ENCODE measurements at regions of chr9 and their contacts with region 1.

Region 1: GRCh38 chr9:129932303-129933151 is 97.3 kb downstream of the USP20 start:
- DNase-seq: peak; percentile 47
- ATAC-seq: peak; percentile 52
- H3K4me3 ChIP-seq: no peak overlapping the region
- H3K27ac ChIP-seq: peak overlapping the region; percentile 84
- H3K4me1 ChIP-seq: peaks cover 46% of the 10 kb centered on the region
- H3K27me3 ChIP-seq: no peaks in the 10 kb centered on the region
- CTCF ChIP-seq: no peak
- EP300 ChIP-seq: 0 out of 4 replicates have a peak, but pooled peaks of 1 of the 2 experiments have one; percentile 18
- POLR2A ChIP-seq: no peak
- RAD21 ChIP-seq: no peak

Region 2: DNA sequence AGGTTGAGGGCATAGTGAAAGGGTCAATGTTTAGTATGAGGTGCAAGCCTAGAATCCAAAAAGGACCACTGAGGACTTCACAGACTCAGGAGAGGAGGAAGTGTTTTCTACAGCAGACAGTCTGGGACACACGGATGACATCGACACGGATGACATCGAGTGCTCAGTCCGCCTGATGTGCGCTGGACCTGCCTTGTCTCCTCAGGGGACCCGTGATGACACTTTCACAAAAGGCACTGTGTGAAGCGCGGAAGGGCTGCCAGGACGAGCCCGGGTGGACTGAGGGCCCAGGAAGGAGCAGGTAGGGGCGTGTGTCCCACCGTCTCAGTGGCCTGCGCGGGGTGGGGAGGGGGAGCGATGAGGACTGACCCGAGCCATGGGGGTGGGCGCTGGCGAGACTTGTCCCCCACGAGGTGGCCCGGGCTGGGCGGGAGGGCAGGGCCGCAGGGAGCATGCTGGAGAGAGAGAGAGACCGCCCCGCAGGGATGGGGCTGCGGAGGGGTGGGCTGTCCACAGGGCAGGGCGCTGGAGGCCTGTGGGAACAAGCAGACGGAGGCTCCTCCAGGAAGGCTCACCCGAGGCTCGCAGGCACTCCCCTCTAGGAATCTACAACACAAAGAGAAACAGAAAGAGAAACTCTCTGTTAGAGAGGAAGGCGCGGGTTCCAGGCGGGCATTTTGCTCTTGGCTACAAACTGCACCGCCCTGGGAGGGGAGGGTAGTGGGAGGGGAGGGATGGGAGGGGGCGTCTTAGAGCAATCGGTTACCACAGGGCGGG is 42.4 kb before region 1 on chr9:
- CTCF ChIA-PET with region 1: interaction called, 13 read pairs
- POLR2A ChIA-PET with region 1: interaction called, 11 read pairs
- RAD21 ChIA-PET with region 1: interaction called, 36 read pairs
- SMC1A ChIA-PET with region 1: interaction called, 22 read pairs
- in situ Hi-C with region 1: no loop called
- intact Hi-C with region 1: loop called (anchors 1 kb)
- DNase-seq: peak; percentile 31
- ATAC-seq: peak; percentile 1; the same call in 1 of the 3 replicates
- H3K4me3 ChIP-seq: peak overlapping the region; percentile 31; the same call in 1 of the 2 replicates
- H3K27ac ChIP-seq: peak overlapping the region; percentile 96
- H3K4me1 ChIP-seq: peaks cover 90% of the 10 kb centered on the region
- H3K27me3 ChIP-seq: no peaks in the 10 kb centered on the region
- CTCF ChIP-seq: no peak
- EP300 ChIP-seq: no peak
- POLR2A ChIP-seq: peak; percentile 72; the same call in 1 of the 2 replicates
- RAD21 ChIP-seq: no peak

Region 3: GRCh38 chr9:129962889-129963703 is 30.6 kb after region 1 on chr9:
- CTCF ChIA-PET with region 1: interaction called, 9 read pairs
- POLR2A ChIA-PET with region 1: interaction called, 41 read pairs
- RAD21 ChIA-PET with region 1: interaction called, 34 read pairs
- SMC1A ChIA-PET with region 1: interaction called, 46 read pairs
- in situ Hi-C with region 1: no loop called
- intact Hi-C with region 1: no loop called
- DNase-seq: peak; percentile 59
- ATAC-seq: peak; percentile 96
- H3K4me3 ChIP-seq: peak overlapping the region; percentile 64
- H3K27ac ChIP-seq: peak overlapping the region; percentile 90
- H3K4me1 ChIP-seq: peaks cover 47% of the 10 kb centered on the region
- H3K27me3 ChIP-seq: no peaks in the 10 kb centered on the region
- CTCF ChIP-seq: no peak
- EP300 ChIP-seq: no peak
- POLR2A ChIP-seq: peak; percentile 58
- RAD21 ChIP-seq: no peak

Region 4: GRCh38 chr9:129995409-129996160 is 63.1 kb after region 1 on chr9:
- CTCF ChIA-PET with region 1: interaction called, 6 read pairs
- POLR2A ChIA-PET with region 1: interaction called, 24 read pairs
- RAD21 ChIA-PET with region 1: interaction called, 16 read pairs
- SMC1A ChIA-PET with region 1: interaction called, 32 read pairs
- in situ Hi-C with region 1: no loop called
- intact Hi-C with region 1: no loop called
- DNase-seq: no peak
- ATAC-seq: peak; percentile 44
- H3K4me3 ChIP-seq: peak overlapping the region; percentile 37; the same call in 1 of the 2 replicates
- H3K27ac ChIP-seq: peak overlapping the region; percentile 100
- H3K4me1 ChIP-seq: peaks cover 77% of the 10 kb centered on the region
- H3K27me3 ChIP-seq: no peaks in the 10 kb centered on the region
- CTCF ChIP-seq: no peak
- EP300 ChIP-seq: no peak
- POLR2A ChIP-seq: peak; percentile 52
- RAD21 ChIP-seq: no peak

Region 5: DNA sequence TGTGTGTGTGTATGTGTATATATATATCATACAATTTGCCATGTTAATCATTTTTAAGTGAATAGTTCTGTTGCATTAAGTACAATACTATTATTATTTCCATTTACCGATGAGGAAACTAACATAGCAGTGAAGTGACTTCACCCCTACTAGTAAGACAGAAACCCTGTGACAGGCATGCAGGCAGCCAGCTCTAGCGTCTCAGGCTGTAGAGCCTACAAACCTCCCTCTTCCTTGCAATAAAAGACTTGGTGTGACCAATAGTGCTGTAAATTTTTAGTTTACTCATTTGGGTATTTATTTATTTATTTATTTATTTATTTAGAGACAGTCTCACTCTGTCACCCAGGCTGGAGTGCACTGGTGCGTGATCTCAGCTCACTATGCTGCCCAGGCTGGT is 85.7 kb after region 1 on chr9:
- CTCF ChIA-PET with region 1: no interaction called
- POLR2A ChIA-PET with region 1: interaction called, 10 read pairs
- RAD21 ChIA-PET with region 1: interaction called, 5 read pairs
- SMC1A ChIA-PET with region 1: interaction called, 18 read pairs
- in situ Hi-C with region 1: no loop called
- intact Hi-C with region 1: no loop called
- DNase-seq: no peak
- ATAC-seq: peak; percentile 26
- H3K4me3 ChIP-seq: no peak overlapping the region
- H3K27ac ChIP-seq: peak overlapping the region; percentile 83
- H3K4me1 ChIP-seq: peaks cover 88% of the 10 kb centered on the region
- H3K27me3 ChIP-seq: no peaks in the 10 kb centered on the region
- CTCF ChIP-seq: no peak
- EP300 ChIP-seq: no peak
- POLR2A ChIP-seq: no peak
- RAD21 ChIP-seq: no peak

Region 6: GRCh38 chr9:130029223-130029973 is 96.9 kb after region 1 on chr9:
- CTCF ChIA-PET with region 1: interaction called, 3 read pairs
- POLR2A ChIA-PET with region 1: interaction called, 3 read pairs
- RAD21 ChIA-PET with region 1: interaction called, 14 read pairs
- SMC1A ChIA-PET with region 1: interaction called, 10 read pairs
- in situ Hi-C with region 1: no loop called
- intact Hi-C with region 1: no loop called
- DNase-seq: no peak
- ATAC-seq: peak; percentile 12
- H3K4me3 ChIP-seq: peak overlapping the region; percentile 46
- H3K27ac ChIP-seq: peak overlapping the region; percentile 83
- H3K4me1 ChIP-seq: peaks cover 85% of the 10 kb centered on the region
- H3K27me3 ChIP-seq: no peaks in the 10 kb centered on the region
- CTCF ChIP-seq: no peak
- EP300 ChIP-seq: peak; percentile 42 to 45; a peak in 2 of 4 replicates
- POLR2A ChIP-seq: no peak
- RAD21 ChIP-seq: no peak